ENCODE measurements at regions of chr9 and their contacts with region 1.

Region 1: GRCh38 chr9:69190086-69190862 is 16.2 kb downstream of the TJP2 start:
- DNase-seq: no peak

Region 2: GRCh38 chr9:69023650-69024049 is 166.6 kb before region 1 on chr9:
- intact Hi-C with region 1: no loop called
- DNase-seq: no peak

Region 3: DNA sequence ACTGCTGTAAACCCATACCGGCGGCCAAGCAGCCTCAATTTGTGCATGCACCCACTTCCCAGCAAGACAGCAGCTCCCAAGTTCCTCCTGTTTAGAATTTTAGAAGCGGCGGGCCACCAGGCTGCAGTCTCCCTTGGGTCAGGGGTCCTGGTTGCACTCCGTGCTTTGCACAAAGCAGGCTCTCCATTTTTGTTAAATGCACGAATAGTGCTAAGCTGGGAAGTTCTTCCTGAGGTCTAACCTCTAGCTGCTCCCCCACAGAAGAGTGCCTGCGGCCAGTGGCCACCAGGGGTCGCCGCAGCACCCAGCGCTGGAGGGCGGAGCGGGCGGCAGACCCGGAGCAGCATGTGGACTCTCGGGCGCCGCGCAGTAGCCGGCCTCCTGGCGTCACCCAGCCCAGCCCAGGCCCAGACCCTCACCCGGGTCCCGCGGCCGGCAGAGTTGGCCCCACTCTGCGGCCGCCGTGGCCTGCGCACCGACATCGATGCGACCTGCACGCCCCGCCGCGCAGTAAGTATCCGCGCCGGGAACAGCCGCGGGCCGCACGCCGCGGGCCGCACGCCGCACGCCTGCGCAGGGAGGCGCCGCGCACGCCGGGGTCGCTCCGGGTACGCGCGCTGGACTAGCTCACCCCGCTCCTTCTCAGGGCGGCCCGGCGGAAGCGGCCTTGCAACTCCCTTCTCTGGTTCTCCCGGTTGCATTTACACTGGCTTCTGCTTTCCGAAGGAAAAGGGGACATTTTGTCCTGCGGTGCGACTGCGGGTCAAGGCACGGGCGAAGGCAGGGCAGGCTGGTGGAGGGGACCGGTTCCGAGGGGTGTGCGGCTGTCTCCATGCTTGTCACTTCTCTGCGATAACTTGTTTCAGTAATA is 154.6 kb before region 1 on chr9 and contains the start of gene FXN:
- intact Hi-C with region 1: loop called (anchors 5 kb)
- DNase-seq: peak; percentile 72 to 97 (median 77)

Region 4: DNA sequence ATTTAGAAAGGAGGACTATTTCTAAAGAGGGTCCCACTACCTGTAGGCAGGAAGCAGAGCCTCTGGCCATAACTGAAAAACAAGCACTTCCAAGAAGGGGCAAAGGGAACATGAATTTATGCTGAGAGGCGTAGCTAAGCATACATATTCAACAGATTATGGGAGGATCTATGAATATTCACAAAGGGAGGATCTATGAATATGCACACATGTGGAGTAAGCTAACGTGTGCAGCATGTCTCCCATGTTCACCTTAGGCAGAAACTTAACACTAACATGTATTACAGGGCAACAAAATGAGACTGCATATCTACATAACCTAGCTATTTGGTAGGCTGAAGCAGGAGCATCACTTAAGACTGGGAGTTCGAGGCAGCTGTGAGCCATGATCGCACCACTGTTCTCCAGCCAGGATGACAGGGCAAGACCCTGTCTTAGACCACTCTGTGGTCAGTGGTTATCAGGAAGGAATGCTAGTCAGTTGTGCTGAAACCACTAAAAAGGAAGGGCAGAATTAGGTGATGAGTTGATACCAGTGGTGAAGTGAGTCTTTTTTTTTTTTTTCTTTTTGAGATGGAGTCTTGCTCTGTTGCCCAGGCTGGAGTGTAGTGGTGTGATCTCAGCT is 134.0 kb before region 1 on chr9:
- intact Hi-C with region 1: loop called (anchors 2 kb)
- DNase-seq: no peak